Gastrocnemius medialis (tissue), 4 donors: ENCODE measurements at regions of chr4 and their contacts with region 1.

Region 1: DNA sequence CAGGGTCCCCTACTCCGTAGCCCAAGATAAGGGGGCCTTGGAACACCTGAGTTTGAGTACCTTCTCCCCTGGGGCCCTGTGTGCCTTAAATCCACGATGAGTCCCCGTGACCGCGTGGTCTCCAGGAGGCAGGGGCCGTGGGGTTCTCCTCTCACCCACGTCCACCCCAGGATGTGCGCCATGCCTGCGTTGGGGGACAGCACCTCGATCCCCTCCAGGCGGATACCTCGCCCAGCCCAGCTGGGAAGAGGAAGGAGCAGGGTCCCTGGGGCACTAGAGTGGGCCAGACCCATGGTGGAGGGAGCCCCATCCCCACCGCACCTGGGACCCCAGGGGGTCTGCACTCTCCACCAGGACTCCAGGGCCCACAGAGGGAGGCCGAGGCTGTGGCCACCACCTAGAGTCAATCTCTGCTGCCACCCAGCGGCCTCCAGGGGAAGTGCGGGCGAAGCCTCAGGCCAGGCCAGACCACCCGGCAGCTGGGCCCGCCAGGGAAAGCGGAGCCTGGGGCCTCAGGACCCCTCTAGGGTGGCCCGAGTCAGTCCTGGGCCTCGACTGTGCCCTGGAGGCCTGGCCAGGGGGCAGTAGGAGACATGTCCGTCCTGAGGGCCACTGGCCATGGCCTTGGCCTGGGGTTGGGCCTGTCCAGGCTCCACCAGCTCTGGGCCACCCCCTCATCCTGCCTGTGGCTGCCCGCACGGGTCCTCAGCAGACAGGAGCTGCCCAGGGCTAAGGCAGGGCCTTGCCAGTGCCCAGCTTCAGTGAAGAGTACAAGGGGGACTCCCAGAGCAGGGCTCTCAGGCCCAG is 55.0 kb downstream of the FAM53A start:
- DNase-seq: peak in 1 of 2 donors; percentile 32
- ATAC-seq: peak; percentile 64 to 70
- H3K4me3 ChIP-seq: no peak overlapping the region
- H3K27ac ChIP-seq: no peak overlapping the region
- H3K4me1 ChIP-seq: no peaks in the 10 kb centered on the region
- H3K27me3 ChIP-seq: no peaks in the 10 kb centered on the region
- CTCF ChIP-seq: peak; percentile 60 to 97 (median 90)
- POLR2A ChIP-seq: no peak

Region 2: GRCh38 chr4:1351854-1352633 is 277.1 kb before region 1 on chr4:
- in situ Hi-C with region 1: loop called in 2 of 4 experiments (anchors 25 kb)
- intact Hi-C with region 1: loop called (anchors 2 kb)
- DNase-seq: peak; percentile 58 to 71
- ATAC-seq: peak; percentile 25 to 42
- H3K4me3 ChIP-seq: no peak overlapping the region
- H3K27ac ChIP-seq: peak overlapping the region in 1 of 4 donors; percentile 30
- H3K4me1 ChIP-seq: peaks cover 16 to 25% of the 10 kb centered on the region in 2 donors
- H3K27me3 ChIP-seq: no peaks in the 10 kb centered on the region
- CTCF ChIP-seq: peak; percentile 62 to 97 (median 90)
- POLR2A ChIP-seq: no peak

Region 3: DNA sequence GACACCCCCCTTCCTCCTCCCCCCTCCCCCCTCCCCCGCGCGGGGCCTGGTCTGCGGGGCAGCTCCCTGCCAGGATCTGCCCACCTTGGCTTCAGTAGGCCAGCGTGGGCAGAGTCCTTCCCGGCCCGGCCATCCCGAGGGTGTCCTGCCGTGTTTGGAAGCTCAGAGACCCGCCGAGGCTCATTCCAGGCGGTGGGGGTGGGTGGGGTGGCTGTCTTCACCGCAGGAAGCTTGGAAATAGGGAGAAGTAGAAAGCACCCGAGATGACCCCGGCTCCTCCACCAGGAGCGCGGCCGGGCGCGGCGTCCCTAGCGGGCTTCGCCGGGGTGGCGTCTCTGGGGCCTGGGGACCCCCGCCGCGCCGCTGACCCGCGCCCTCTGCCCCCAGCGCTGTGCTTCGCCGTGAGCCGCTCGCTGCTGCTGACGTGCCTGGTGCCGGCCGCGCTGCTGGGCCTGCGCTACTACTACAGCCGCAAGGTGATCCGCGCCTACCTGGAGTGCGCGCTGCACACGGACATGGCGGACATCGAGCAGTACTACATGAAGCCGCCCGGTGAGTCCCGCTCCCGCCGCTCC is 431.6 kb after region 1 on chr4:
- in situ Hi-C with region 1: no loop called
- intact Hi-C with region 1: no loop called
- DNase-seq: no peak
- ATAC-seq: no peak
- H3K4me3 ChIP-seq: peak overlapping the region in 1 of 4 donors; percentile 53
- H3K27ac ChIP-seq: no peak overlapping the region
- H3K4me1 ChIP-seq: no peaks in the 10 kb centered on the region
- H3K27me3 ChIP-seq: peaks cover 8 to 16% (median 10%) of the 10 kb centered on the region in 3 donors
- CTCF ChIP-seq: no peak
- POLR2A ChIP-seq: no peak